Astrocyte of the cerebellum (primary cell): ENCODE measurements at regions of chr18 and their contacts with region 1.

Region 1: DNA sequence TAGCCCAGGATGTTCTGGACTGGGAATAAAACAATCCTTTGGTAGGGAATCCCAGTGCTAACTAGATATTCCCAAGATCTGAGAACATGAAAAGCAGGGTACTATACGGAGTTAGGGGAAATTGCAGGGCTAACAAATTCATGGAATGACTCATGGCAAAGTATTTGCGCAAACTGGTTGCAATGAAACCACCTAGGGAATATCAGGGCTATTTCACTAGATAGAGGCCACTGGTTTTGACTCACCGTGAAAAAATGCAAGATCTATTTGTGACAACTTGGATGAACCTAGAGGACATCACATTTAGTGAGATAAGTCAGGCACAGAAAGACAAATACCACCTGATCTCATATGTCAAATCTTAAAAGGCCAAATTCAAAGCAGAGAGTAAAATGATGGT is 233.3 kb downstream of the MBD2 start:
- DNase-seq: peak; percentile 11
- H3K4me3 ChIP-seq: no peak overlapping the region
- CTCF ChIP-seq: no peak

Region 2: DNA sequence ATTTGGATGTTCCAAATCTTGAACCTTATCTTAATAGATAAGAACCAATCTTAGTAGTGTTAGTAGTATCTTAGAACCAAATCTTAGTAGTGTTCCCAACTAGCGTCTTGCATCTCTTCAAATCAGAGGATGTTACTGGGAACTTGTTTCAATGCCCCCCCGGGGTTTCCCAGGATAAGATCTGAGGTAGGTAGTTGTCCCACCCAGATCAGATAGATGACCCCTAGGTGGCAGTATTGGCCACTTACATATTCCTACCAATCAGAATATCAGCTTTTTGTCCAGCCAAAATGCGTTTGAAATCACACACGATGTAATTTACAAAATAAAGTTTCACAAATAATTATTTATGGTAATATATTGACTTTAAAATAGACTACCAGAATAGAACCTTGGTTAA is 81.5 kb before region 1 on chr18:
- in situ Hi-C with region 1: no loop called
- DNase-seq: no peak
- H3K4me3 ChIP-seq: no peak overlapping the region
- CTCF ChIP-seq: peak; percentile 50

Region 3: GRCh38 chr18:53944721-53945120 is 46.5 kb before region 1 on chr18:
- in situ Hi-C with region 1: no loop called
- DNase-seq: no peak
- H3K4me3 ChIP-seq: no peak overlapping the region
- CTCF ChIP-seq: no peak

Region 4: DNA sequence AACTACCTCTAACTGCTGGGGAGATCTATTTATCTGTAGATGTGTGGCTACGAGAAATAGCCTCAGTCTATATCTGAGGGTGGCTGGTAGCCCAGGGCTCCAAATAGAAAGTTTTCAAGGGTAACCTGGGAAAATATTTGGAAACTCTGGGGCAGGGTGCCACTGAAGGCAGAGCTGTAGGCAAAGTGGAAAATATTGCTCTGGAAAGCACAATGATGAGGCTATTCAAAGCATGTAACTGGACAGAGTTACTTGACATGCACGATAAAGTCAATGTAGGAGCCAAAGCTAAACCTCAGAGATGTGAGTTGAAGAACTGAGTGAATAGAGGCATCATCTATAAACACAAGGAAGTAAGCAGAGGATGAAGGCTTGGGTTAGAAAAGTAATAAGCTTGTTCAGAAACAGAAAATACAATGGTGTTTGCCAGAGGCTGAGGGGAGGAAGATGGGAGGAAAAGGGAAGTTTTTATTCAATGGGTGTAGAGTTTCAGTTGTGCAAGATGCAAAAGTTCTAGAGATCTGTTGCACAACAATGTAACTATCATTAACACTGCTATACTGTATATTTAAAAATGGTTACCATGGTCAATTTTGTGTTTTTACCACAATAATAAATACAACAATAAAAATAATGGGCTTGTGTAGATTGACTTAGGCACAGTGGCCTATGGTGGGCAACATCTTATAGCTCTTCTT is 61.7 kb after region 1 on chr18:
- in situ Hi-C with region 1: loop called (anchors 5 kb)
- DNase-seq: no peak
- H3K4me3 ChIP-seq: no peak overlapping the region
- CTCF ChIP-seq: no peak